Activated T-helper 1 cell treated with anti-CD3 and anti-CD28 coated beads, Interleukin-12 subunit alpha, Interleukin-12 subunit beta, Interleukin-2, Interleukin-4 antibody, amounts not matched to agents 30 ng/mL and 10 ng/mL and 1 ng/mL, durations not matched to agents 14 hours and 24 hours and 36 hours (primary cell): ENCODE measurements at regions of chr2 and their contacts with region 1.

Region 1: GRCh38 chr2:171798252-171798741 is 95.7 kb downstream of the SLC25A12 start:
- DNase-seq: no peak
- H3K4me3 Mint-ChIP-seq: no peak overlapping the region
- H3K27ac Mint-ChIP-seq: peak overlapping the region; percentile 52
- H3K4me1 Mint-ChIP-seq: peaks cover 25% of the 10 kb centered on the region
- H3K27me3 Mint-ChIP-seq: no peaks in the 10 kb centered on the region

Region 2: GRCh38 chr2:171754254-171754939 is 43.9 kb before region 1 on chr2:
- intact Hi-C with region 1: loop called (anchors 2 kb)
- DNase-seq: no peak
- H3K4me3 Mint-ChIP-seq: no peak overlapping the region
- H3K27ac Mint-ChIP-seq: no peak overlapping the region
- H3K4me1 Mint-ChIP-seq: no peaks in the 10 kb centered on the region
- H3K27me3 Mint-ChIP-seq: no peaks in the 10 kb centered on the region